CD4-positive, alpha-beta memory T cell (primary cell): ENCODE measurements at regions of chr10 and their contacts with region 1.

Region 1: DNA sequence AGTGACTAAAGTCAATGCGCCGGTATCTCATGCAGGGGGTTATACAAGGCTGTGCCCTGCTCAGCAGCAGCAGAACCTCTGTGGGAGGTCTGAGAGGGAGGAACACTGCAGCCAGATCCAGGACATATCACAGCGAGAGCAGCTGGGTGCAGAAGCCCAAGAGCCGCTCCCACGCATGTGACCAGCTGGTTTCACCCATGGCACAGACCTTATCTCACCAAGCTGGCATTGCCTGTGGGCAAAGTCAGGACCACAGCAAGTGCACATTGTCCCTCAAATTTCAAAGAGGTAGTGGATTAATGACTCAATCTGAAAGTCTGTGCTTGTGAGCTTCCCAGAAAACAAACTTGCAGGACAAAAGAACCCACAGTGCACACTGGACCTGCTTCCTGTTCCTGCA is 31.6 kb upstream of the AKR1C1 start:
- DNase-seq: no peak
- H3K4me3 ChIP-seq: no peak overlapping the region
- H3K4me3 Mint-ChIP-seq: no peak overlapping the region
- H3K27ac ChIP-seq: no peak overlapping the region
- H3K27ac Mint-ChIP-seq: no peak overlapping the region
- H3K4me1 ChIP-seq: no peaks in the 10 kb centered on the region
- H3K4me1 Mint-ChIP-seq: no peaks in the 10 kb centered on the region
- H3K27me3 ChIP-seq: no peaks in the 10 kb centered on the region
- H3K27me3 Mint-ChIP-seq: peaks cover 2 to 6% of the 10 kb centered on the region in 2 donors

Region 2: GRCh38 chr10:4947635-4948596 is 16.3 kb after region 1 on chr10:
- CTCF ChIA-PET with region 1: no interaction called
- POLR2A ChIA-PET with region 1: no interaction called
- intact Hi-C with region 1: no loop called
- DNase-seq: no peak
- H3K4me3 ChIP-seq: no peak overlapping the region
- H3K4me3 Mint-ChIP-seq: no peak overlapping the region
- H3K27ac ChIP-seq: no peak overlapping the region
- H3K27ac Mint-ChIP-seq: no peak overlapping the region
- H3K4me1 ChIP-seq: no peaks in the 10 kb centered on the region
- H3K4me1 Mint-ChIP-seq: no peaks in the 10 kb centered on the region
- H3K27me3 ChIP-seq: no peaks in the 10 kb centered on the region
- H3K27me3 Mint-ChIP-seq: no peaks in the 10 kb centered on the region

Region 3: DNA sequence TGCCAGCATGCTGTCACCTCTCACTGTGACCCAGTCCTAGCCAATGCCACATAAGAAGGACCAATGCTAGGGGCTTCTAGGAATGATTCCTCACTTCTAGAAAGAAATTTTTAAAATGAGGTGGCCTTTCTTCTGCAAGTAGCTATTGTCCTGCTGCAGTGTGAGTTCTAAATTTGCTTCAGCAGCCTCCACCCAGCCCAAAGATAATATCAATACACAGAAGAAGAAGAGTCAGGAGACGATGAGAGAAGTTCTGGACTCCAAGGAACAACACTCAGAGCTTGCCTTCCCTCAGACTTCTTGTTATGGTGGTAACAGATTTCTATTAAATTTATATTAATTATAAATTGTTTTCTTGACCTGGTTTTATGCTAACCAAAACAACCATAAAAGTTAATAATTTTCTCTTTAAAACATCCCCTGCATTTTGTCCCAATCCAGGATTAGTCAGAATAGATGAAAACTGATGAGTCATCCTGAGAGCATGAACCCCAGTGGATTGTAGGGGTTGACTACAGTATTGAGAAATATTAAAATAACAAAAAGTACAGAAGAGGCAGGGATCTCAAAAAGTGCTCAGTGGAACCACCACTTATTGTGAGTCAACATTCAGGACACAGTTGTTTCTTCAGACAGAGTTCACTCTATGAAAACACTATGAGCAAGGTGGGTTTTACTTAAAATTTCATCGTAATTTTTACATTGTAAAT is 101.6 kb after region 1 on chr10:
- CTCF ChIA-PET with region 1: no interaction called
- POLR2A ChIA-PET with region 1: no interaction called
- intact Hi-C with region 1: loop called (anchors 5 kb)
- DNase-seq: no peak
- H3K4me3 ChIP-seq: no peak overlapping the region
- H3K4me3 Mint-ChIP-seq: no peak overlapping the region
- H3K27ac ChIP-seq: no peak overlapping the region
- H3K27ac Mint-ChIP-seq: no peak overlapping the region
- H3K4me1 ChIP-seq: no peaks in the 10 kb centered on the region
- H3K4me1 Mint-ChIP-seq: no peaks in the 10 kb centered on the region
- H3K27me3 ChIP-seq: no peaks in the 10 kb centered on the region
- H3K27me3 Mint-ChIP-seq: peaks cover 3 to 7% of the 10 kb centered on the region in 2 donors